RWPE1 (cell line): ENCODE measurements at regions of chr11 and their contacts with region 1.

Region 1: GRCh38 chr11:46389450-46390253 is 1.9 kb downstream of the CHRM4 start:
- DNase-seq: peak; percentile 81
- H3K27ac ChIP-seq: no peak overlapping the region
- CTCF ChIP-seq: peak; percentile 96

Region 2: GRCh38 chr11:46529095-46529905 is 139.6 kb after region 1 on chr11:
- CTCF ChIA-PET with region 1: interaction called, 13 read pairs
- POLR2A ChIA-PET with region 1: interaction called, 9 read pairs
- DNase-seq: peak; percentile 85
- H3K27ac ChIP-seq: no peak overlapping the region
- CTCF ChIP-seq: peak; percentile 92